Dendritic cell treated with granulocyte-macrophage colony-stimulating factor and Interleukin-4, amounts not matched to agents 40 ng/mL and 50 ng/mL, for 4 days (primary cell): ENCODE measurements at regions of chr10 and their contacts with region 1.

Region 1: GRCh38 chr10:101031128-101031795 is at the starts of genes PDZD7 and SFXN3:
- H3K4me3 Mint-ChIP-seq: peak within 1 kb of the TSS; percentile 93
- H3K27ac Mint-ChIP-seq: peak within 1 kb of the TSS; percentile 98
- H3K4me1 Mint-ChIP-seq: peaks cover 61% of the 10 kb centered on the region
- H3K27me3 Mint-ChIP-seq: peaks cover 6% of the 10 kb centered on the region

Region 2: GRCh38 chr10:100998991-100999741 is 32.1 kb before region 1 on chr10:
- intact Hi-C with region 1: loop called (anchors 5 kb)
- H3K4me3 Mint-ChIP-seq: peak overlapping the region; percentile 91
- H3K27ac Mint-ChIP-seq: peak overlapping the region; percentile 71
- H3K4me1 Mint-ChIP-seq: peaks cover 47% of the 10 kb centered on the region
- H3K27me3 Mint-ChIP-seq: peaks cover 7% of the 10 kb centered on the region

Region 3: GRCh38 chr10:101042667-101043355 is 11.5 kb after region 1 on chr10:
- intact Hi-C with region 1: loop called (anchors 1 kb)
- H3K4me3 Mint-ChIP-seq: peak overlapping the region; percentile 90
- H3K27ac Mint-ChIP-seq: peak overlapping the region; percentile 100
- H3K4me1 Mint-ChIP-seq: peaks cover 35% of the 10 kb centered on the region
- H3K27me3 Mint-ChIP-seq: peaks cover 30% of the 10 kb centered on the region

Region 4: DNA sequence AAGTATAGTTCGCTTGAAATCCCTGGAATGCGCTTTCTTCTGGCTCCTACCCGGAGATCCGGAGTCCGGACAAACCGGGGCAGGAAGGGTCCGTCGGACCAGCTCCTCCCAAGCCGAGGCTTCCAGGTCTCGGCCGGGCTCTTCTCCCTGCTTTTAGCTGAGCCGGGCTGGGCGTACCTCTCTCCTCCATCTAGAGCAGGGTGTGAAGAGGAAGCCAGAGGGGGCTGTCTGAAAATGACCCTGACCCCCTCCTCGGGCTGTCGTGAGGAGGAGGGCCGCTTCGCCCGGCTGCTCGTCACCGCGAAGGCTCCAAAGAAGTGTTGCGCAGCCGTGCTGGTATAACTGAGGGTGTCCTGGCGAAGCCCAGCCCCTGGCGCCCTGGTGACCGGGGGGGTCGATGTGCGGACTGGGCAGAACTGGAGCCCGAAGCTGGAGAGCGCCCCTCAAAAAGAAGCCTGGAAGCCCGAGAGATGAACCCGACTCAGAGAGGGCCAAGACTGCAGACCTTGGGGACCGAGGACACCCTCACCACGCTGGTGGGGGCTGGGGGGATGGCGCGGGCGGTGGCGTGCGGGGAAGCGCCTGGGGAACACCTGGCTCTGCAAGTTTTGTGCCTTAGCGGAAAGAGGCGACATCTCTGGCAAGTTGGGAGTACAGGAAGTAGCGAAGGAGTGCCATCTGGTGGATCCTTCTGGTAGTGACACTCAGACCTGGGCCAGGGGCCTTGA is 36.3 kb after region 1 on chr10:
- intact Hi-C with region 1: loop called (anchors 5 kb)
- H3K4me3 Mint-ChIP-seq: peak overlapping the region; percentile 79
- H3K27ac Mint-ChIP-seq: peak overlapping the region; percentile 40
- H3K4me1 Mint-ChIP-seq: peaks cover 90% of the 10 kb centered on the region
- H3K27me3 Mint-ChIP-seq: peaks cover 50% of the 10 kb centered on the region

Region 5: GRCh38 chr10:102945449-102946361 is 1914.4 kb after region 1 on chr10:
- intact Hi-C with region 1: no loop called
- H3K4me3 Mint-ChIP-seq: no peak overlapping the region
- H3K27ac Mint-ChIP-seq: no peak overlapping the region
- H3K4me1 Mint-ChIP-seq: no peaks in the 10 kb centered on the region
- H3K27me3 Mint-ChIP-seq: no peaks in the 10 kb centered on the region